ENCODE measurements at regions of chr10 and their contacts with region 1.

Region 1: GRCh38 chr10:110273474-110273873 is 31.2 kb downstream of the SMNDC1 start:
- H3K4me3 ChIP-seq: no peak overlapping the region
- H3K27ac ChIP-seq: no peak overlapping the region
- H3K4me1 ChIP-seq: peaks cover 38% of the 10 kb centered on the region
- CTCF ChIP-seq: no peak

Region 2: GRCh38 chr10:110205051-110205675 is 68.3 kb before region 1 on chr10:
- CTCF ChIA-PET with region 1: interaction called, 43 read pairs
- POLR2A ChIA-PET with region 1: interaction called, 4 read pairs
- H3K4me3 ChIP-seq: no peak overlapping the region
- H3K27ac ChIP-seq: no peak overlapping the region
- H3K4me1 ChIP-seq: no peaks in the 10 kb centered on the region
- CTCF ChIP-seq: no peak

Measured in HEK293 (cell line).